PC-9 (cell line): ENCODE measurements at regions of chr6 and their contacts with region 1.

Region 1: GRCh38 chr6:9761220-9761619 is 653.7 kb downstream of the TFAP2A start:
- DNase-seq: no peak
- H3K4me3 ChIP-seq: no peak overlapping the region
- H3K27ac ChIP-seq: no peak overlapping the region
- H3K4me1 ChIP-seq: peaks cover under 1% of the 10 kb centered on the region; the same call in 1 of the 2 replicates
- H3K27me3 ChIP-seq: no peaks in the 10 kb centered on the region
- CTCF ChIP-seq: no peak

Region 2: GRCh38 chr6:9933674-9934073 is 172.5 kb after region 1 on chr6:
- CTCF ChIA-PET with region 1: no interaction called
- POLR2A ChIA-PET with region 1: interaction called, 12 read pairs
- intact Hi-C with region 1: no loop called
- DNase-seq: no peak
- H3K4me3 ChIP-seq: no peak overlapping the region
- H3K27ac ChIP-seq: no peak overlapping the region
- H3K4me1 ChIP-seq: no peaks in the 10 kb centered on the region
- H3K27me3 ChIP-seq: no peaks in the 10 kb centered on the region
- CTCF ChIP-seq: no peak